Left ventricle myocardium inferior (tissue), 1 donor: ENCODE measurements at regions of chr5 and their contacts with region 1.

Region 1: DNA sequence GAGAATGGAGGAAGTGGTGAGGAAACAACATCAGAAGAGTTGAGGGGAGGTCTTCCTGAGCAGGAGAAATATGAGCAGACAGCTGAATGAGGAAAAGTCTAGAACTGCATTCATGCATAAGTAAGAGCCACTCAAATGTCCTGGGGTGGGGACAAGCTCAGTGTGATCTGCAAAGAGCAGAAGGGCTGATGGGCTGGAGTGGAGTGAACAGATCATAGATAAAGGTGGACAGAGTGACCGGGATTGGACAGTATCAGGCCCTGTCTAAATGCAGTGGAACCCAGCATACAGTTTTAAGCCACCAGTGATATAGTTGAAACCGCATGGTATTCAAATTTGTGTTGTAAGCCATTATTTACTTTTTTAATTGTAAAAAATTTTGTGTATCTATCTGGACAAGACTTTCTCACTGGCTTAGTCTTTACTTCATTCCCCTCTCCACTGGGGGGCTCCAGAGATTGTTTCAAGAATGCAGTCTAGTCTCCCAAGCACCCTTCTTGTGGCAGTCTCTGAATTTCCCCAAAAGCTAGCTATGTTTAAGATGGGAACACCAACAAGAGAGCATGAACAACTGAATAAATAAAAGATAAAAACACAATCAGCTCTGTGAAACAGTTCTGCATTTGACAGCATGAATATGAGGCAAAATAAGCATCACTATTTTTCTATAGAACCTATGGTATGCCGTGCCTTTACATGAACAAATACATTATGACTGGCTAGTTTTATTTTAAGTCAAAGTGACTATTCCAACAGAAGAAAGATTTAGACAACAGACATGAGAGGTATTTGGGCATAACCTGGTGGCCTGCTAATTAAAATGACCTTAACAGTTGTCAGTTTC is 10.7 kb upstream of the STK32A start:
- DNase-seq: no peak
- H3K4me3 ChIP-seq: no peak overlapping the region
- H3K27ac ChIP-seq: no peak overlapping the region
- H3K4me1 ChIP-seq: no peaks in the 10 kb centered on the region
- H3K27me3 ChIP-seq: peaks cover 43% of the 10 kb centered on the region
- CTCF ChIP-seq: peak; percentile 74

Region 2: GRCh38 chr5:146993876-146994530 is 230.2 kb before region 1 on chr5:
- intact Hi-C with region 1: no loop called
- DNase-seq: no peak
- H3K4me3 ChIP-seq: no peak overlapping the region
- H3K27ac ChIP-seq: no peak overlapping the region
- H3K4me1 ChIP-seq: no peaks in the 10 kb centered on the region
- H3K27me3 ChIP-seq: no peaks in the 10 kb centered on the region
- CTCF ChIP-seq: no peak

Region 3: GRCh38 chr5:147267082-147267832 is 43.1 kb after region 1 on chr5:
- intact Hi-C with region 1: no loop called
- DNase-seq: no peak
- H3K4me3 ChIP-seq: no peak overlapping the region
- H3K27ac ChIP-seq: no peak overlapping the region
- H3K4me1 ChIP-seq: no peaks in the 10 kb centered on the region
- H3K27me3 ChIP-seq: peaks cover 25% of the 10 kb centered on the region
- CTCF ChIP-seq: no peak

Region 4: DNA sequence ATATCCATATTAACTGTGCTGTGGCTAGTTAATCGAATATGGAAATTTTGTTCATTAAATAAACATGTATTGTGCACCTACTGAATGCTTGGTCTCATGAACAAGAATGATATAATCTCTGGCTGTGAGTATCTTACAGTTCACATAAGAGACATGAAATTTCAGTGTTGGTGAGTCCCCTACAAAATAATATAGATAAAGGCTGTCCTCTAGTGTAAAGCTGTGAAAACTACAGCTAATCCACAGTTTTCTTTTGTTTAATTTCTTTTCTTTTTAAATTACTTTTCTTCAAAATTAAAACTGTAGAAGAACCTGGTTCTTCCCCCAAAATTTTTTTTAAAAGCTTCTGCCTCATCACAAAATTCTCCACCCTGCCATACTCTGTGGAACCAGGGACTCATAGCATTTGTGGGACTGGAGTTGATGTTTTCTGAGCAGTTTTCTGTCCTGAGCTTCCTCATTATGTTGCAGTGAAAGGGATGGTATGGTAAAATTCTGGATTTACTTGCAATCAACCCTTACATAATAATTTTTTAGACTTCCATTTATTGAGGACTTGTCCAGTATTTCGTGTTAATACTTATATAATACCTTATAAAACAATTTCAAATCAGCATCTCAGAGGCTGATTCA is 145.7 kb after region 1 on chr5:
- intact Hi-C with region 1: loop called (anchors 5 kb)
- DNase-seq: no peak
- H3K4me3 ChIP-seq: no peak overlapping the region
- H3K27ac ChIP-seq: no peak overlapping the region
- H3K4me1 ChIP-seq: no peaks in the 10 kb centered on the region
- H3K27me3 ChIP-seq: peaks cover 6% of the 10 kb centered on the region
- CTCF ChIP-seq: peak; percentile 74

Region 5: GRCh38 chr5:147576646-147577535 is 352.7 kb after region 1 on chr5:
- intact Hi-C with region 1: loop called (anchors 5 kb)
- DNase-seq: peak; percentile 65
- H3K4me3 ChIP-seq: no peak overlapping the region
- H3K27ac ChIP-seq: no peak overlapping the region
- H3K4me1 ChIP-seq: no peaks in the 10 kb centered on the region
- H3K27me3 ChIP-seq: no peaks in the 10 kb centered on the region
- CTCF ChIP-seq: peak; percentile 92